ENCODE measurements at regions of chr18 and their contacts with region 1.

Region 1: DNA sequence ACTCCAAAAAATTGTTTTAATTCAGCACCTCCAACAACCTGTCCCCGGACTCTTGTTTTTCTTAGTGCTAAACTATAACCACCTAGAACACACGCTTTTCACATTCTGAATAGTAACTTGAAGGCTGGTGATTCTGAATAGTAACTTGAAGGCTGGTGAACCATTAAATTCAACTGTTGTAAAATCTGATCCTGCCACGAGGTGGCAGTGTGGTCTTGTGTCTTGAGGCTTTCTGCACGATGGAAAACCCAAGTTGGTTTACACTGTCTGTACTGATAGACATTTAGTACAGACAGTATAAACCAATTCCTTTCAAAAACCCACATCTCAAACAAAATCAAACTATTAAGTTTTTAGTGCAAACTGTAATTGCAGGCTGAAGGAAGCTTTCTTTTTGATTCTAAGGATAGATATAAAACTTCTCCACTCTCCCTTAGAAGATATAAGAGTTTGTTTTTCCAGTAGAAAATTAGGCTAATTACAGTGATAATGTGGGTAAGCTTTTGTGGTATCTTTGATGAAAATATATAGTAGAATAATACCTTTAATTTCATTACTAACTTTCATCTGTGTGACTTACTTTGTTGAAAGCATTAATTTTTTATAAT is 57.6 kb downstream of the VAPA start:
- DNase-seq: peak; percentile 76
- H3K4me3 Mint-ChIP-seq: no peak overlapping the region
- H3K27ac Mint-ChIP-seq: no peak overlapping the region
- H3K4me1 Mint-ChIP-seq: peaks cover 20% of the 10 kb centered on the region
- H3K27me3 Mint-ChIP-seq: peaks cover 16% of the 10 kb centered on the region
- CTCF ChIP-seq: peak; percentile 71

Region 2: GRCh38 chr18:10519999-10520935 is 548.9 kb after region 1 on chr18:
- CTCF ChIA-PET with region 1: interaction called, 4 read pairs
- intact Hi-C with region 1: loop called (anchors 1 kb)
- DNase-seq: peak; percentile 74
- H3K4me3 Mint-ChIP-seq: no peak overlapping the region
- H3K27ac Mint-ChIP-seq: no peak overlapping the region
- H3K4me1 Mint-ChIP-seq: peaks cover 12% of the 10 kb centered on the region
- H3K27me3 Mint-ChIP-seq: peaks cover 71% of the 10 kb centered on the region
- CTCF ChIP-seq: peak; percentile 63

Measured in Calu3 (cell line).